CD8-positive, alpha-beta T cell (primary cell): ENCODE measurements at regions of chr6 and their contacts with region 1.

Region 1: DNA sequence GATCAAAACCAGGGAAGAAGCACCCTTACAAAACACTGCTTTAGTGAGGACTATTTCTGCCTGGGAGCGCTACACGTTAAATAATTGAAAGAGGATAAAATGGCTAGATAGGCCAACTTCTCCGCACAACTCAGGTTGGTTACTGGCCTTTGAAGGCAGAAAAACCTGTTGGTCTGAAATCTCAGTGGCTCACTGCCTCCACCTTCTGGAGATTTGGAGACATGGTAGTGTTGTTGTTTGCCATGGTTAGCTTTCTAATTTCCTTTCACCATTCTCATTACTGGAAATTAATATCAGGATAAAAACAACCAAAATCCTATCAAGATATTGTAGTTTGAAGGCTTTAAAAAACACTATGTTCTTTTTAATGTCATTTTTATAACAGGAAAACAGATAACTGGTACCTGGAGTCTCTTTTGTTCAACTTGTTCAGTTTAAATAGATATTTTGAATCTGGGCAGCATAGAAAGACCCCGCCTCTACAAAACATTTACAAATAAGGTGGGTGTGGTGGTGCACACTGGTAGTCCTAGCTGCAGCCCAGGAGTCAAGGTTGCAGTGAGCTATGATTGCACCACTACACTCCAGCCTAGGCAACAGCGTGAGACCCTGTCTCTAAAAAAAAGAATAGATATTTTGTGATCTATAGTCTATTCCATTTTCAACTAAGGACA is 27.5 kb upstream of the BCLAF1 start:
- DNase-seq: peak; percentile 34 to 84 (median 66)
- ATAC-seq: peak; percentile 97
- H3K4me3 ChIP-seq: no peak overlapping the region
- H3K4me3 Mint-ChIP-seq: no peak overlapping the region
- H3K27ac ChIP-seq: no peak overlapping the region
- H3K27ac Mint-ChIP-seq: no peak overlapping the region
- H3K4me1 ChIP-seq: no peaks in the 10 kb centered on the region
- H3K4me1 Mint-ChIP-seq: no peaks in the 10 kb centered on the region
- H3K27me3 ChIP-seq: peaks cover 0 to 3% of the 10 kb centered on the region in 2 experiments
- H3K27me3 Mint-ChIP-seq: peaks cover 2% of the 10 kb centered on the region
- CTCF ChIP-seq: peak; percentile 93

Region 2: DNA sequence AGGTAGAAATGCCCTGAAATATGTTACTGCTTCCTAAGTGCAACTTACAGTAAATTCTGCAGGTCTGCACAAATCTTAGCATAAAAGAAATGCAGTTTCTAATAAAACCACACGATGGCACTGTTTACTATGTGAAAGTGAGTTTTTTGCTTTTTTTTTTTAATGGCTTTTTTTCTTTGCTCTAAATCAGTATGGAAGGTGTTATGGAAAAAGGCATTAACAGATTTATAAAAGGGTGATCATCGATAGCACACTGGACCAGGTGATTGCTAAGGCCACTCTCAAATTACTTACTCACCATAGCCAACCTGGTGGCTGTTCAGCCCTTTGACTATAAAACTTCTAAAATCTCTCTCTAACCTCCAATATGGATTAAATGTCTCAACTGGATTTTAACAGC is 865.5 kb before region 1 on chr6:
- CTCF ChIA-PET with region 1: no interaction called
- POLR2A ChIA-PET with region 1: no interaction called
- intact Hi-C with region 1: loop called (anchors 2 to 5 kb)
- DNase-seq: peak in 2 of 9 experiments; percentile 55 to 63
- ATAC-seq: peak; percentile 52
- H3K4me3 ChIP-seq: no peak overlapping the region
- H3K4me3 Mint-ChIP-seq: no peak overlapping the region
- H3K27ac ChIP-seq: no peak overlapping the region
- H3K27ac Mint-ChIP-seq: no peak overlapping the region
- H3K4me1 ChIP-seq: no peaks in the 10 kb centered on the region
- H3K4me1 Mint-ChIP-seq: no peaks in the 10 kb centered on the region
- H3K27me3 ChIP-seq: no peaks in the 10 kb centered on the region
- H3K27me3 Mint-ChIP-seq: no peaks in the 10 kb centered on the region
- CTCF ChIP-seq: peak; percentile 94

Region 3: DNA sequence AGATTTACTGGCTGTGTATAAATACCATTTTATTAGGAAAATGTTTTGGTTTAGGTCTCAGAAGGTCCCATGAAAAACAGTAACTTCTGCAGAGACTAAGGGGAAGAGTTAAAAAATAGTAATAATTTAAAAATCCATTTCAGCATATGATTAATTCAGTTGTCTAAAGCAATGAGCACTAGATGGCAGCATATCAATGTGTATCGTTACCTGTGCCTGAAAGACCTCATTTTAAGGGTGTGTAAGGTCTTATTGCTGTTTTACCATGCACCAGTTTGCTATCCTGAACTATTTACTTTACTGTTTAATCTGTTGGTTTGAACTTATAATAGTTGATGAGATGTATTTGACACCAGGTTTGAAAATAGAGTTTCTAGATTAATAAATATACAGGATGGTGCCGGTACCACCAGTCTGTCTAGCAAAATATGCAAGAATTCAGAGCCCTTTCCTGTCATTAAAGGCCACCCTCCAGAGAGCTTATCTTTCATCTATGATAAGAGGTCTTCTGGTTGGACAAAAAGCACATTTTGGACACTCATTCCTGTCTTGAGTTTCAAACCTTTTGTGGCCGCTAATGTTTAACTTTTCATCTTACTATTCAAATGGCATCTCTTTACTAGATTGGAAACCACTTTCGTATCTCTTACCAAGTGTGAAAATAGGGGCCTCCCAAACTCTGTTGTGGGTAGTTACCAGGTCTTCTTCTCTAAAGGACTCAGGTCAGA is 810.7 kb before region 1 on chr6:
- CTCF ChIA-PET with region 1: interaction called, 7 read pairs
- POLR2A ChIA-PET with region 1: no interaction called
- intact Hi-C with region 1: loop called (anchors 1 to 2 kb)
- DNase-seq: peak in 3 of 9 experiments; percentile 7 to 76 (median 65)
- ATAC-seq: peak; percentile 82
- H3K4me3 ChIP-seq: no peak overlapping the region
- H3K4me3 Mint-ChIP-seq: peak overlapping the region; percentile 13
- H3K27ac ChIP-seq: peak overlapping the region in 1 of 2 experiments; percentile 30
- H3K27ac Mint-ChIP-seq: no peak overlapping the region
- H3K4me1 ChIP-seq: no peaks in the 10 kb centered on the region
- H3K4me1 Mint-ChIP-seq: peaks cover 4% of the 10 kb centered on the region
- H3K27me3 ChIP-seq: no peaks in the 10 kb centered on the region
- H3K27me3 Mint-ChIP-seq: no peaks in the 10 kb centered on the region
- CTCF ChIP-seq: peak; percentile 63

Region 4: GRCh38 chr6:135675862-135676261 is 641.3 kb before region 1 on chr6:
- CTCF ChIA-PET with region 1: no interaction called
- POLR2A ChIA-PET with region 1: no interaction called
- intact Hi-C with region 1: loop called (anchors 2 to 5 kb)
- DNase-seq: peak in 7 of 9 experiments; percentile 4 to 75 (median 38)
- ATAC-seq: peak; percentile 75
- H3K4me3 ChIP-seq: no peak overlapping the region
- H3K4me3 Mint-ChIP-seq: no peak overlapping the region
- H3K27ac ChIP-seq: no peak overlapping the region
- H3K27ac Mint-ChIP-seq: no peak overlapping the region
- H3K4me1 ChIP-seq: no peaks in the 10 kb centered on the region
- H3K4me1 Mint-ChIP-seq: no peaks in the 10 kb centered on the region
- H3K27me3 ChIP-seq: no peaks in the 10 kb centered on the region
- H3K27me3 Mint-ChIP-seq: no peaks in the 10 kb centered on the region
- CTCF ChIP-seq: peak; percentile 72

Region 5: GRCh38 chr6:136031982-136032381 is 285.2 kb before region 1 on chr6:
- CTCF ChIA-PET with region 1: no interaction called
- POLR2A ChIA-PET with region 1: no interaction called
- intact Hi-C with region 1: loop called in 1 of 2 experiments (anchors 10 kb)
- DNase-seq: peak in 2 of 9 experiments; percentile 6 to 16
- ATAC-seq: no peak
- H3K4me3 ChIP-seq: no peak overlapping the region
- H3K4me3 Mint-ChIP-seq: no peak overlapping the region
- H3K27ac ChIP-seq: no peak overlapping the region
- H3K27ac Mint-ChIP-seq: no peak overlapping the region
- H3K4me1 ChIP-seq: no peaks in the 10 kb centered on the region
- H3K4me1 Mint-ChIP-seq: no peaks in the 10 kb centered on the region
- H3K27me3 ChIP-seq: no peaks in the 10 kb centered on the region
- H3K27me3 Mint-ChIP-seq: no peaks in the 10 kb centered on the region
- CTCF ChIP-seq: peak; percentile 12

Region 6: DNA sequence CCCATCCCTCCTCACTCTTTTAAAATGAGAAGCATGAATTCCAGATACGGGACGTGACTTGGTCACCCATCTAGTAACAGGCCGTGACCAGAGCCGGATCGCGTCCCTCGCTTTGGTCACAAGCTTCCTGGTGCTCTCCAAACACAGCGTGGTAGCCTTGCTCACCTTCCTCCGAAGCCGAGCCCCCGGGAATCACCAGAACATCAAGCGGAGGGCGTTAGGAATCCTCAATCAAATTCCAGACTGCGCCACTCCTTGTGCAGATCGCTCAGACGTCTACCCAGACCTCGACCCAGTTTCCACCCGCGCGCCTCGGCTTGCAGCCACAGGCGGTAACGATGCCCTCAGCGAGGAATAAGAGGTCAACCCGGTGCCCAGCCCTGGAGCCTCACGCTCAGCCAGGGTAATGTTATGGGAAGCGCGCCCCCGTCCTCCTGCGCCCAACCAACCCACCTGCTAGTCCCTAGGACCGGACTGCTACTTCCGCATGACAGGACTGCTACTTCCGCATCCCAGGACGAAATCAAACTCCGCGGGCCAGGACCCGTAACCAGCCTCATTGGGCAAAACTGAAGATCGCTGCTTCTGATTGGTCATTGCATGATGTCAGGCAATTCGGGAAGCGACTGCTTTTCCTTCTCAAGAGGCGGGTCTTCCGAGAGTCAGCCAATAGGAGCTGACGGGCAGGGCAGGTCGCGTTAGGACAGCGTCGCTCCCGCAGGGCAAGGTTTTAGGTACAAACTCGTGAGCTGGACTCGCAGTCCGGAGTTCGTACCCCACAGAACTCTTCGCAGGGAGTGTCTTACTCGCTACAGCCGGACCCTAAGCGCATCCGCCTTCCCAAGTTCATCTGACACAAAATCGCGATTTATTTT is 67.1 kb before region 1 on chr6 and contains the start of gene MTFR2:
- CTCF ChIA-PET with region 1: interaction called, 13 read pairs
- POLR2A ChIA-PET with region 1: interaction called, 4 read pairs
- intact Hi-C with region 1: loop called (anchors 1 to 2 kb)
- DNase-seq: peak; percentile 85 to 99 (median 92)
- ATAC-seq: peak; percentile 97
- H3K4me3 ChIP-seq: peak within 1 kb of the TSS; percentile 57 to 74
- H3K4me3 Mint-ChIP-seq: peak within 1 kb of the TSS; percentile 97
- H3K27ac ChIP-seq: peak within 1 kb of the TSS in 1 of 2 experiments; percentile 17
- H3K27ac Mint-ChIP-seq: peak within 1 kb of the TSS; percentile 71
- H3K4me1 ChIP-seq: peaks cover 11% of the 10 kb centered on the region
- H3K4me1 Mint-ChIP-seq: peaks cover 36% of the 10 kb centered on the region
- H3K27me3 ChIP-seq: no peaks in the 10 kb centered on the region
- H3K27me3 Mint-ChIP-seq: no peaks in the 10 kb centered on the region
- CTCF ChIP-seq: no peak
- total RNA-seq, gene MTFR2: 1.3 to 1.5 TPM

Region 7: GRCh38 chr6:136282906-136283305 is 34.3 kb before region 1 on chr6:
- CTCF ChIA-PET with region 1: interaction called, 7 read pairs
- POLR2A ChIA-PET with region 1: no interaction called
- intact Hi-C with region 1: loop called (anchors 2 to 5 kb)
- DNase-seq: peak in 2 of 9 experiments; percentile 23 to 37
- ATAC-seq: no peak
- H3K4me3 ChIP-seq: no peak overlapping the region
- H3K4me3 Mint-ChIP-seq: peak overlapping the region; percentile 68
- H3K27ac ChIP-seq: peak overlapping the region in 1 of 2 experiments; percentile 34
- H3K27ac Mint-ChIP-seq: no peak overlapping the region
- H3K4me1 ChIP-seq: peaks cover 74% of the 10 kb centered on the region
- H3K4me1 Mint-ChIP-seq: peaks cover 85% of the 10 kb centered on the region
- H3K27me3 ChIP-seq: no peaks in the 10 kb centered on the region
- H3K27me3 Mint-ChIP-seq: no peaks in the 10 kb centered on the region
- CTCF ChIP-seq: no peak

Region 8: DNA sequence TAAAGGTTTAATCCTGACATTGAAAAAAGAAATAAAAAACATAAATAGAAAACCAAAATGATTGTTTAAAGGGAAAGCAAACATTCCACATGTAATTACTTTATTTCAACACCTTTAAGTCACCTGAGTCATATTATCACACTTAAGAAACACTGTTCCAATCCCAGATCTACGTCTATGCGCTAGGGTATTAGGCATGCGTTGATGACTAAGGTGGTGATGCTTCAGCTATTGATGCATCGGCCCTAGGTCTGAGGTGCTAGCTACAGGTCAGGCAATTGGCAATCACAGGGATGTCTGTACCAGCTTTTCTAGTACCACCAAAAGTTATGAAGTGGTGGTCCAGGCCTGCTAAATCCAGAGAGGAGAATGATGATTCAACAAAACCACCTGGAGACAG is 70.2 kb after region 1 on chr6:
- CTCF ChIA-PET with region 1: no interaction called
- POLR2A ChIA-PET with region 1: no interaction called
- intact Hi-C with region 1: no loop called
- DNase-seq: no peak
- ATAC-seq: no peak
- H3K4me3 ChIP-seq: no peak overlapping the region
- H3K4me3 Mint-ChIP-seq: no peak overlapping the region
- H3K27ac ChIP-seq: no peak overlapping the region
- H3K27ac Mint-ChIP-seq: no peak overlapping the region
- H3K4me1 ChIP-seq: no peaks in the 10 kb centered on the region
- H3K4me1 Mint-ChIP-seq: no peaks in the 10 kb centered on the region
- H3K27me3 ChIP-seq: no peaks in the 10 kb centered on the region
- H3K27me3 Mint-ChIP-seq: no peaks in the 10 kb centered on the region
- CTCF ChIP-seq: no peak